Activated CD4-positive, alpha-beta memory T cell treated with anti-CD3 and anti-CD28 coated beads for 36 hours (primary cell): ENCODE measurements at regions of chr12 and their contacts with region 1.

Region 1: DNA sequence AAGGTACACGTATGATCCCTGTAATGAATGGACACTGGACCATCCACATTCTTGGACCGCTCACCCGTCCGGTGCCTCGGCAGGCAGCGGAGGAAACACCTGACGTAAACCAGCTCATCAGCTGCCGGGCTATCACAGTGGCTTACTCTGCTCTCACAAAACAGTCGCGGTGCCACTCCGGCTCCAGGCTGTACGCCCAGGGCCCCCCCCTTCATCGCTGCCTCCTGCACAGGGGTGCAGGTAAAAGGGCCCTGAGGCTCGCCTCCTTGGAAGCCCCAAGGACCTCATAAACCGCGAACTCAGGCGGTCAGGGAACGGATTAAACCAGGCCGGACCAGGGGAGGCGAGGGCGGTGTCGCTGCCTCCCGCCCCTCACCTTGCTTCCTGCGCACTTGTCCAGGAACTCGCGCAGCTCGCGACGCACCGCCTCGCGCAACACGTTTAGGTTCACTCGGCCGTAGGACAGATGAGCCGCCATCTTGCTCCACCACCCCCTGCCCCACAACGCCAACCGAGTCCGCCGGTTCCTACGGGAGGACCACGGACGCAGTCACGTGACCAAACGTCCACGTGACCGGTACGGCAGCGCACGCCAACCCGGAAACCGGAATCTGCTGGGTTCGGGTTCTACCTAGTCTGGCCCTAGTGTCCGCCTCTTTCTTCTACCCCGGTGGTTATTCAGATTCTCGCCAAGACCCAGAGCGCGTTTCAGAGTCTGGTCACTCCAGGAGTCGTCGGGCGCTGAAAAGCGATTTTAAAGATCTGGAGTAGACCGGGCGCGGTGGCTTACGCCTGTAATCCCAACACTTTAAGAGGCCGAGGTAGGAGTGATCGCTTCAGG is at the start of gene VPS33A:
- DNase-seq: peak; percentile 97
- H3K4me3 Mint-ChIP-seq: peak within 1 kb of the TSS; percentile 99
- H3K27ac Mint-ChIP-seq: peak within 1 kb of the TSS; percentile 99
- H3K4me1 Mint-ChIP-seq: peaks cover 19% of the 10 kb centered on the region
- H3K27me3 Mint-ChIP-seq: peaks cover 3% of the 10 kb centered on the region
- total RNA-seq, gene VPS33A: 24.2 to 24.6 TPM

Region 2: GRCh38 chr12:122203301-122204166 is 62.6 kb before region 1 on chr12 and contains the start of gene B3GNT4:
- CTCF ChIA-PET with region 1: no interaction called
- POLR2A ChIA-PET with region 1: no interaction called
- intact Hi-C with region 1: loop called (anchors 10 kb)
- DNase-seq: peak; percentile 76
- H3K4me3 Mint-ChIP-seq: peak within 1 kb of the TSS; percentile 78
- H3K27ac Mint-ChIP-seq: no peak within 1 kb of the TSS
- H3K4me1 Mint-ChIP-seq: peaks cover 9% of the 10 kb centered on the region
- H3K27me3 Mint-ChIP-seq: peaks cover 14% of the 10 kb centered on the region
- total RNA-seq, gene B3GNT4: 2.3 to 3.6 TPM

Region 3: DNA sequence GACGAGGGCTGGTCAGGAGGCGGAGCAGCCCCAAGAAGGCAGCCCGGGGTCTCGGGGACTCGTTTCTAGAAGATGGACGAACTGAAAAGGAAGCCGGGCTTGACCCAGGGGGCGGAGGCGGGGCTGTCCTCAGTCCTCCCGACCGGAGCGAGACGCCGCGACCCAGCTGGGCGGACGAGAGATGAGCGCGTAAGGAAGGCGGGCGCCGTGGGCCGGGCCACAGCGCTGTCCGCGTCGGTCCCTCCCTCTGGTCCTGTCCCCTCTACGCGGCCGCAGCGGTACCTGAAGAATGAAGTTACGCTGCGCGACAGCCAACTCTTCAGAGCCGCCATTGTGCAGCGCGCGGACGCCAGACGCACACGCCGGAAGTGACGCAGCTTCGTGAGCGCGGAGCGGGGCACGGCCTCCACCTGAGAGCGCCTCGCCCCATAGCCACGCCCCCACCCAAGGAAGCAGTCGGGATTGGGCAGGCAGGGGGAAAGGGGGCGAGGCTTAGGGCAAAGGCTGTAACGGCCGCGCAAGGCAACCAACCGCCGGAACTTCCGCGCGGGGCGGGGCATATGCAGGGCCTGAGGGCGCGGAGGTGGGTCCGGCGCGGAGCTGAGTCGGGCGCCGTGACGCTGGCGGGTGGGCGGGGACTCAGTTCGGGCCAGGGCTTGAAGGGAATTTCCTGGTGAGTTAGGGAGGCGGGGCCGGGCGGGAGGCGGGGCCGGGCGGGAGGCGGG is 40.3 kb before region 1 on chr12 and contains the start of gene DIABLO:
- CTCF ChIA-PET with region 1: interaction called, 6 read pairs
- POLR2A ChIA-PET with region 1: interaction called, 7 read pairs
- intact Hi-C with region 1: loop called (anchors 1 kb)
- DNase-seq: peak; percentile 100
- H3K4me3 Mint-ChIP-seq: peak within 1 kb of the TSS; percentile 85
- H3K27ac Mint-ChIP-seq: peak within 1 kb of the TSS; percentile 82
- H3K4me1 Mint-ChIP-seq: peaks cover 43% of the 10 kb centered on the region
- H3K27me3 Mint-ChIP-seq: no peaks in the 10 kb centered on the region
- total RNA-seq, gene DIABLO: 51.8 to 52.0 TPM

Region 4: DNA sequence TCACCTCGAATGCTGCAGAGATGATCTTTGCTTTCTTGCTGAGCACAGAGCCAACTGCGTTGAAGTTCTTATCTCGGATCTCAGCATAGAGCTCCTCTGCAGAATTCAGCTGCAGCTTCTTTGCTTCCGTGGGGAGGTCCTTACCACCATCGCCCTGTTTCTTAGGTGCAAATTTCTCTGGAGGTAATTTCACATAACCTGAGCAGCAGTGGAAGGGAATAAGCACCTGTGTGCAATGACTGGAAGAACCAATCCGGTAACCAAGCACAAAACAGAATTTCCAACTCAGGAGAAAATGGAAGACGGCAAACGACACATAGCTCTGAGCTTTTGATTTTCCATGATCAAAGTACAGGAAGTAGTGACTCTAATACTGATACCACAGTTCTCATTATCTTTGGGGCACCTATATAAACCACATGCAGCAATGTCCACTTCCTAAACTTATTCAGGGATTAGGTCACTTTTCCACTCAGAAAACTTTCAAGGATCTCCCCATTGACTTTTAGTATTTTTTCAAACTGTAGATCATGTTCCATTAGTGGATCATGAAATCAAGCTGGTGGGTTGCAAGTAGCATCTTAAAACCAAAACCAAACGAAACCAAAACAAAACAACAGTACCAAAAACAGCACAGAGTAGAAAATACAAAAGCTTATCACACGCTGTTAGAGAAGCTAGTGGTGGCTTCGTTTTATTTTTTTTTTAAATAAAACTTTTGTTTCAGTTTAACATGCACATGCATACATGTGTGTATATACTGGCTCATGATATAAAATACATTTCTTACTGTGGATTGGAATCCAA is 21.4 kb before region 1 on chr12:
- CTCF ChIA-PET with region 1: interaction called, 10 read pairs
- POLR2A ChIA-PET with region 1: interaction called, 6 read pairs
- intact Hi-C with region 1: loop called (anchors 1 kb)
- DNase-seq: peak; percentile 42
- H3K4me3 Mint-ChIP-seq: peak overlapping the region; percentile 74
- H3K27ac Mint-ChIP-seq: peak overlapping the region; percentile 83
- H3K4me1 Mint-ChIP-seq: peaks cover 25% of the 10 kb centered on the region
- H3K27me3 Mint-ChIP-seq: no peaks in the 10 kb centered on the region